ENCODE measurements at regions of chr11 and their contacts with region 1.

Region 1: DNA sequence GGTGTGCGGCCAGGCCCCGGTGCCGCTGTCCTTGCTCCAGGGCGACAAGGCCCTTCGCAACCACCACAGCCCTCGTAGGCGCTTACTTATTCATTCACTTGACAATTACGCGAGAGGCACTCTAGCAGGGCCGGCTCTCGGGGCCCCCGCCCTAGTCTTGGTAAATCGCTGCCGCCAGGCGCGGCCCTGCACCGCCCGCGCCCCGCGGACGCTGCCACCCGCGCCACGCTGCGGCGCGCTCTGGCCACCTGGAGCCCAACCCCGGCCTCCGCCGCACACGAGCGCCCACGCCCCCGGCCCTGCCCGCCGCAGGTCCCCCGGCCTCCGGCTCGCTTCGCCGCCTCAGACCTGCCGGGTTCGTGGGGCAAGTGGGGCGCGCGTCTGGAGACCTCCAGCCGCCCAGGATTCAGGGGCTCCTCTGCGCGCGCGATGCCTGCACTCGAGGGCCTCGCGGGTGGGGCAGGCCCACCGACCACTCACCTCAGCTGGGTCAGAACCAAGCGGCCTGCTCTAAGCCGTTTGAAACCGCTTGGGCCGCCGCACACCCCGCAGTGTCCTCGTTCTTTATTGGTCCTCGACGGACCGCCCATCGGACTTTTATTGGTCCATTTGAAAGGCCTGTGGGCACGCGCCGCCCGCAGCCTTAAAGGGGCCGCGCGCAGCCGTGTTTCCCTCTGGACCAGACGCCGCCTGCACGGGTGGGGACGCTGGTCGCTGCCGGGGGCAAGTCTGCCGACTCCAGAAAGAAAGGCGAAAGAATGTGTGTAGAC is at the start of gene CKAP5:
- DNase-seq: peak; percentile 92
- ATAC-seq: peak; percentile 92
- H3K4me3 Mint-ChIP-seq: peak within 1 kb of the TSS; percentile 86
- H3K27ac Mint-ChIP-seq: peak within 1 kb of the TSS; percentile 94
- H3K4me1 Mint-ChIP-seq: peaks cover 30% of the 10 kb centered on the region
- H3K27me3 Mint-ChIP-seq: no peaks in the 10 kb centered on the region
- total RNA-seq, gene CKAP5: 166 to 183 TPM

Region 2: GRCh38 chr11:46295312-46296058 is 550.4 kb before region 1 on chr11:
- CTCF ChIA-PET with region 1: no interaction called
- POLR2A ChIA-PET with region 1: no interaction called
- intact Hi-C with region 1: loop called in 1 of 2 experiments (anchors 1 kb)
- DNase-seq: peak; percentile 82
- ATAC-seq: peak; percentile 93
- H3K4me3 Mint-ChIP-seq: peak overlapping the region; percentile 72
- H3K27ac Mint-ChIP-seq: no peak overlapping the region
- H3K4me1 Mint-ChIP-seq: peaks cover 12% of the 10 kb centered on the region
- H3K27me3 Mint-ChIP-seq: peaks cover 10% of the 10 kb centered on the region

Region 3: DNA sequence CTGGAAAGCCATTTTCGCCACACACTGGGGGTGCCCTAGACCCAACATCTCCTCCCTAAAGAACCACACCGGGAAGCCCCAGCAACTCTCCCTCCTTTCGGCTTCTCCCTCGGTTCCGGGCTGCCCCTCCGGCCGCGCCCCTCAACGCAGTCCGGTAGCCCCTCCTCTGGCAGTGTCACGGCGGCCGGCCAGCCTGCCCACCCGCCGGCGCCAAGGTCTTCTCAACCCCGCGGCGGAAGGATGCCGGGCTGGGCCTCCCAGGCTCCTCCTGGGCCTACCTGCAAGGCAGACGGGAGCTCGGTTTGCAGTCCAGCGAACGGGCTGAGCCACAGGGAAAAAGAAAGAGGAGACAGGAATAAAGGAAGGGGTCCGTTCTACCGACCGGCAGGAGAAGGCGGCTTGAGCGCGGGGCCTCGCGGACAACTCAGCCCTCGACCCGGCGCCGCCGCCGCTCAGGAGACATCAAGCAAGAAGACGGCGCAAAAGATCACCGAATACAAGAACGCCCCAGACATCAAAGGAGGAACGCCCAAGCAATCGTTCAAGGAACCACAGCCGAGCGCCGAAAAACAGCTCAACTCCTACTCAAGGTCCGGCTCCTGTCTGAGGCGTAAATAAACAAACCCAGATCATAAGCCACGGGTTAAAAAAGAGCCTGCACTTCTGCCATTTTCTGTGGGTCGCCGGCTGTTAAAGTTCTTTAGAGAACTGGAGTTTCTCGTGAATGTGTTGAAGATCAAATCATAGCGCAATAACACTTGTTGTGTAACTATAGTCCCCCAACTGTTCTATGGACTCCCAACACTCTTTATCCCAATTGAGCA is 252.2 kb before region 1 on chr11 and contains the start of gene AMBRA1:
- CTCF ChIA-PET with region 1: no interaction called
- POLR2A ChIA-PET with region 1: no interaction called
- intact Hi-C with region 1: loop called in 1 of 2 experiments (anchors 1 kb)
- DNase-seq: peak; percentile 91
- ATAC-seq: peak; percentile 87
- H3K4me3 Mint-ChIP-seq: peak within 1 kb of the TSS; percentile 93
- H3K27ac Mint-ChIP-seq: peak within 1 kb of the TSS; percentile 91
- H3K4me1 Mint-ChIP-seq: peaks cover 40% of the 10 kb centered on the region
- H3K27me3 Mint-ChIP-seq: no peaks in the 10 kb centered on the region
- total RNA-seq, gene AMBRA1: 24.8 to 26.4 TPM

Region 4: DNA sequence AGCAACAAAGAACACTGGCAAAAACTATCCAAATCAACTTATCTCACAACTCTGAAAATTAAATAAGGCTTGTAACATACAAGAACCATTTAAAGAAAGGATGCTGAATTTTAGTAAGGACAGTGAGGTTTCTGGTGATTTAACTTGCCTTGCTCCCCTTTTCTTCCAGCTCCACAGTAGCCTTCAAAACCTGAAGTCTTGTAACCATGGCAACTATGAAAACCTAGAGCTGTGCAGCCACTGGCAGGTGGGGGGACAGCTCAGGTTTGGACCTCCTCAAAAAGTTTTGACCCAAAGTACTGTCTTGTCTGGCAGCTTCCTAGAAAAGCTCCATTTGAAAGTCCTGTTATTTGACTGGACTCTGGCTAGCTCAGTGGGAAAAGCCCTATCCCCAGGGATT is 59.8 kb before region 1 on chr11:
- CTCF ChIA-PET with region 1: no interaction called
- POLR2A ChIA-PET with region 1: no interaction called
- intact Hi-C with region 1: no loop called
- DNase-seq: no peak
- ATAC-seq: no peak
- H3K4me3 Mint-ChIP-seq: no peak overlapping the region
- H3K27ac Mint-ChIP-seq: no peak overlapping the region
- H3K4me1 Mint-ChIP-seq: no peaks in the 10 kb centered on the region
- H3K27me3 Mint-ChIP-seq: no peaks in the 10 kb centered on the region

Region 5: DNA sequence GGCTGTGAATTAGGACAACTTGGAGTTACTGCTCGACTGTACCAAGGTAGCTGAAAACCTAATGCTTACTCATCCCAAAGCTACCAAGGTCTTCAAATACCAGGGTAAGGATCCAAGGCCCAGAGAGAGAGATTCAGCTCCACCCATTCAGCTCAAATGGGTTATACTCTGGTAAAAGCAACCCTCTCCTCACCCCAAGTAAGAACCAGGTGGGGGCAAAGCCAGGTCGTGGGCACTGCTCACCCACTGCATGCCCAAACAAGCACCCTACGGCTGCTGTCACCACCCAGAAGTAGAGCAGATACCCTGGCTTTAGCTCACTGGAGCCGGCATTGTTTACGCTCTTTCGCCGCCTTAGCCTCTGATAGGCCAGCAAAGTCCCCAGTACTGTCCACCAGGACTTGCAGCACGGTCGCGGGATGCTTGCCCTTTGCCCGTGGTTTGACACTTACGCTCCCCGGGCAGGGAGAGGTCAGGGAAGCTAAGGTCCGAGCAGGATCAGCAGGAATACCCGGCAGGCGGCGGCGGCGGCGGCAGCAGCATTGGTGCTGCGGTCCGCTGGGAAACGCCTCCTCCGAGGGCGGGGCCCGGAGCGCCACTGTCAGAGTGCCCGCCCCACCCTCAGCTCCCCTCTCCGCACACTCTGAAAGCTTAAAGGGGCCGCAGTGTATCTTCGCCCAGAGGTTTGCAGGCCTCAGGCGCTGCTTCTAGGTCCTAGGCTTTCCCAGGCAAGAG is 19.4 kb before region 1 on chr11:
- CTCF ChIA-PET with region 1: interaction called, 5 read pairs
- POLR2A ChIA-PET with region 1: interaction called, 5 read pairs
- intact Hi-C with region 1: loop called (anchors 1 kb)
- DNase-seq: peak; percentile 81
- ATAC-seq: peak; percentile 100
- H3K4me3 Mint-ChIP-seq: peak overlapping the region; percentile 57
- H3K27ac Mint-ChIP-seq: no peak overlapping the region
- H3K4me1 Mint-ChIP-seq: peaks cover 20% of the 10 kb centered on the region
- H3K27me3 Mint-ChIP-seq: no peaks in the 10 kb centered on the region

Region 6: GRCh38 chr11:46936138-46937110 is 90.5 kb after region 1 on chr11 and contains the start of gene CSTPP1:
- CTCF ChIA-PET with region 1: no interaction called
- POLR2A ChIA-PET with region 1: no interaction called
- intact Hi-C with region 1: loop called in 1 of 2 experiments (anchors 1 kb)
- DNase-seq: peak; percentile 97
- ATAC-seq: peak; percentile 96
- H3K4me3 Mint-ChIP-seq: peak within 1 kb of the TSS; percentile 86
- H3K27ac Mint-ChIP-seq: peak within 1 kb of the TSS; percentile 88
- H3K4me1 Mint-ChIP-seq: peaks cover 16% of the 10 kb centered on the region
- H3K27me3 Mint-ChIP-seq: peaks cover 5% of the 10 kb centered on the region
- total RNA-seq, gene CSTPP1: 17.9 to 18.6 TPM

Region 7: GRCh38 chr11:47269002-47269828 is 423.3 kb after region 1 on chr11:
- CTCF ChIA-PET with region 1: no interaction called
- POLR2A ChIA-PET with region 1: no interaction called
- intact Hi-C with region 1: loop called in 1 of 2 experiments (anchors 1 kb)
- DNase-seq: peak; percentile 93
- ATAC-seq: peak; percentile 61
- H3K4me3 Mint-ChIP-seq: peak overlapping the region; percentile 76
- H3K27ac Mint-ChIP-seq: peak overlapping the region; percentile 98
- H3K4me1 Mint-ChIP-seq: peaks cover 60% of the 10 kb centered on the region
- H3K27me3 Mint-ChIP-seq: no peaks in the 10 kb centered on the region

Measured in activated CD4-positive, alpha-beta T cell treated with anti-CD3 and anti-CD28 coated beads for 36 hours (primary cell).